Colonic mucosa (tissue), 4 donors: ENCODE measurements at regions of chr6 and their contacts with region 1.

Region 1: DNA sequence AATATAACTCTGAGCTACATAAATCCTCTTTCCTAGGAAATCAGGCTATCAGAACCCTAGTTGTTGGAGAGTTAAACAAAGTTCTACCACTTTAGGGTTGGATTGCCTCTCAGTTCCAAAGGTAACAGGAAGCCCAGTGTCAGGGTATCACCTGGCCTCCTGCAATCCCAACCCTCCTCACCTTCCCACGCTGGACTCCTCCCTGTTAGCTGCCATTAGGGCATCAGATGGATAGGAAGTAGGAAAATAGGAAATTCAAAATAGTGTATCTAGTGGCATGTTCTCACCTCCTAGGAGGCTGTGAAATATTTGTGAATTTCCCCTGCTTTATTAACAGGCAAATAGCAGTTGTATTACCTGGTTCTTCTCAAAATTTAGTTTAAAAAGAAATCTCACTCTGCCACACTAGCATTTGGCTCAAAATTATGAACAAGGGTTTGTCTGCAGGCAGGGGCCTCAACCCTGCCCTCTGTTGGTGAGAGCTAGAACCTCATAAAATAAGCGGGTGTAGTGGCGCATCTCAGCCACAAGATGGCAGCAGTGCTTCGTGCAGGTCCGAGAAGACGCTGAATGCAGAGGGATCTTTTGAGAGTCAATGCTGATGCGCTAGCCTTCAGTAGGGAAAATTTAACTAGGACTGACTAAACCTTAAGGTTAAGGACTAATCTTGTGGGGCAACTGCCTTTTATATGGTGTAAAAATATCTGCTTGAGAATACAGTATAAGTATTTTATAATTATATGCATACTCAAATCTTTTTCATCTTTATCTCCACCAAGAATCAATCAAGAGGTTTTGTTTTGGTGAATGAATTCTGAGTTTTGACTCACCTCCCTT is 209.8 kb upstream of the KCNQ5 start:
- DNase-seq: peak; percentile 63
- H3K4me3 ChIP-seq: no peak overlapping the region
- H3K27ac ChIP-seq: no peak overlapping the region
- H3K4me1 ChIP-seq: no peaks in the 10 kb centered on the region
- H3K27me3 ChIP-seq: no peaks in the 10 kb centered on the region
- CTCF ChIP-seq: peak; percentile 100

Region 2: GRCh38 chr6:73129653-73130443 is 717.8 kb after region 1 on chr6:
- intact Hi-C with region 1: loop called (anchors 2 kb)
- DNase-seq: peak; percentile 71
- H3K4me3 ChIP-seq: no peak overlapping the region
- H3K27ac ChIP-seq: no peak overlapping the region
- H3K4me1 ChIP-seq: no peaks in the 10 kb centered on the region
- H3K27me3 ChIP-seq: no peaks in the 10 kb centered on the region
- CTCF ChIP-seq: peak; percentile 86

Region 3: GRCh38 chr6:73329201-73329600 is 917.1 kb after region 1 on chr6:
- intact Hi-C with region 1: loop called (anchors 5 kb)
- DNase-seq: no peak
- H3K4me3 ChIP-seq: no peak overlapping the region
- H3K27ac ChIP-seq: no peak overlapping the region
- H3K4me1 ChIP-seq: no peaks in the 10 kb centered on the region
- H3K27me3 ChIP-seq: no peaks in the 10 kb centered on the region
- CTCF ChIP-seq: no peak